ENCODE measurements at regions of chr13 and their contacts with region 1.

Region 1: DNA sequence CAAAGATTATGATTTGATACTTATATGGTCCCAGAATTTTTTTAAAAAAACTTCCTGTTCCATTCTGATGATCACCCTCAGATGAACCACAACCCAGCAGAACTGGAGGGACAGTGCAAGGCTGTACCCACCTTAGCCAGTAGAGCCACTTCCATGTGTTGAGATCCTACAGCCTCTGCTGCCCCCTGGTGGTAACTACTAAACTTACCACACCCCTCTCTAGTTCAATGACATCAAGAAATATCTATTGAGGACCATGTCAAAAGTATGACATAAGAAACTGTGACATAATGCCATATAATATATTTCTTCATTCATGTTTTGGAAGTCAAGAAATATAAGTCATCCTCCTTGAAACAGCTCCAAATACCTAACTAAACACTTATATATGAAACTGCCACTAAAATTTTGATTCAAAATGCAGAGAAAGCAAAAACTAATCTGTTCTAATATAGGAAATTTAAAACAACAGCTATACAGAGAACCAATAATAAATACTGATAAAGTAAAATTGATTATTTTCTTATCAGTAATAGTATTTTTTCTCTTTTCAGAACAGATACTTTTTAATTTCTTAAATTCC is 412.6 kb downstream of the KCTD12 start:
- DNase-seq: peak; percentile 58
- H3K4me3 ChIP-seq: no peak overlapping the region
- H3K27ac ChIP-seq: no peak overlapping the region
- H3K4me1 ChIP-seq: no peaks in the 10 kb centered on the region
- H3K27me3 ChIP-seq: no peaks in the 10 kb centered on the region
- CTCF ChIP-seq: peak; percentile 54 to 82 (median 78)
- POLR2A ChIP-seq: no peak

Region 2: GRCh38 chr13:75694722-75695121 is 778.9 kb before region 1 on chr13:
- intact Hi-C with region 1: loop called (anchors 5 kb)
- DNase-seq: no peak
- H3K4me3 ChIP-seq: no peak overlapping the region
- H3K27ac ChIP-seq: no peak overlapping the region
- H3K4me1 ChIP-seq: no peaks in the 10 kb centered on the region
- H3K27me3 ChIP-seq: no peaks in the 10 kb centered on the region
- CTCF ChIP-seq: no peak
- POLR2A ChIP-seq: no peak

Region 3: GRCh38 chr13:76239031-76239680 is 234.5 kb before region 1 on chr13:
- intact Hi-C with region 1: no loop called
- DNase-seq: no peak
- H3K4me3 ChIP-seq: no peak overlapping the region
- H3K27ac ChIP-seq: no peak overlapping the region
- H3K4me1 ChIP-seq: no peaks in the 10 kb centered on the region
- H3K27me3 ChIP-seq: no peaks in the 10 kb centered on the region
- CTCF ChIP-seq: no peak
- POLR2A ChIP-seq: no peak

Region 4: GRCh38 chr13:76570510-76570971 is 96.9 kb after region 1 on chr13:
- intact Hi-C with region 1: no loop called
- DNase-seq: no peak
- H3K4me3 ChIP-seq: no peak overlapping the region
- H3K27ac ChIP-seq: no peak overlapping the region
- H3K4me1 ChIP-seq: no peaks in the 10 kb centered on the region
- H3K27me3 ChIP-seq: no peaks in the 10 kb centered on the region
- CTCF ChIP-seq: no peak
- POLR2A ChIP-seq: no peak

Region 5: DNA sequence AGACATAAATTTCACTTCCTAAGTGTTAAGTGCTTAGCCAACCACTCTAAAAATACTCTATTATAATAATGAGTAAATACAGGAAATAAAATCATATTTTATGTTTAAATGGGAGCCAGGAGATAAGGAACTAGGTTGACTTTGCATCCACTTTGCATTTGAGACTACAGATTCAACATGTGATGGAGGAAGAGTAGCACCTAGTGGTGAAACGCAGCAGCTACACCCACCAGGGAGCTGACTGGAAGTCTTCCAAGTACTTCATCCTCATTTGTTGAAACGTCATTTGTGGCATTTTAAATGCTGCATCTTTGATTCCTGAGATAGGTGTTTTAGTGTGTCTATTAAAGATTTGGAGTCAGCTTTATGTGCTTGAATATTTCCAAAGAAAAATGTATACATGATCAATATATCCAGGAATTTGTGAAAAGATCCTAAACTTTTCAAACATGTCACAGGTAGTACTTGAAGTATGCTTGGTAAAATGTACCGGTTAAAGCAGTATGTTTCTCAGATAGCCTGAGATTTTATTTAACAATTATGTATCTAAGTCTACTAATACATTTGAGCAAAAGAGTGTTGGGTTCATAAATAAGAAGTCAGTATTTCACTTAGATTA is 430.0 kb after region 1 on chr13:
- intact Hi-C with region 1: loop called (anchors 10 kb)
- DNase-seq: peak; percentile 52
- H3K4me3 ChIP-seq: no peak overlapping the region
- H3K27ac ChIP-seq: no peak overlapping the region
- H3K4me1 ChIP-seq: no peaks in the 10 kb centered on the region
- H3K27me3 ChIP-seq: no peaks in the 10 kb centered on the region
- CTCF ChIP-seq: peak; percentile 78 to 89 (median 88)
- POLR2A ChIP-seq: no peak

Measured in prostate gland (tissue), 2 donors.